ENCODE measurements at regions of chr10 and their contacts with region 1.

Region 1: DNA sequence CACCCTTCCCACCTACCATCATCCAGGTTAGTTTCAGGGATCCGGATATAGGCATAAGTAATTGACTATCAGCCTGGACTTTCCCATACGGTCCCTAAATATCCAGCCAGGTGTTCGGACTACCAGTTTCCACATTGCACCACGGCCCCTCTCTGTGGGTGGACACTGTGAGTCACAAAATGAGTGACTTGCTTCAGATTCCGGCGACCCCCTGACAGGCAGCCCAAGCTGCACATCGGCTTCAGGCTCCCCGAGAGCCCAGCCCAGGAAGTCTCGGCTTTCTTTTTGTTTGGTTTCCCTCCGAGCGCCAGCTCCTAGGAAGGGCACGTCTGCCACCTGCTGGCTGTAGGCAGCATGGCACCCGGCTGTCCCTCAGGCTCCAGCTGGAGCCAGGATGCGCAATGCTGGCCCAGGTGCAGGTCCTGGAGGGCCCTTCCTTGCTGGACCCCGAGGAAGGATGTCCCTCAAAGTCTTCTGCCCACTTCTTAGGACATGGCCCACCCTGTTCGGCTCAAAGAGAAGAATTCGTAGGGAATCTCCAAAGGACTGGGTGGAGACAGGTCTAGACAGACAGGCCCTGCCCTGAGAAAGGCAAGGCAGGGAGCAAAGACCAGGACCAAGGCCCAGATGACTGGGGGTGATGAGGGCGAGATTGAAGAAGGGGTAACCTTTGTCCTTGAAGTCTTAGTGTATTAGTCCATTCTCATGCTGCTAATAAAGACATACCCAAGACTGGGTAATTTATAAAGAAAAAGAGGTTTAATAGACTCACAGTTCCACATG is 10.6 kb downstream of the HABP2 start:
- DNase-seq: peak; percentile 39 to 54 (median 46)
- H3K4me3 ChIP-seq: peak overlapping the region; percentile 17 to 42
- H3K4me3 Mint-ChIP-seq: peak overlapping the region; percentile 71 to 86 (median 84)
- H3K27ac ChIP-seq: no peak overlapping the region
- H3K27ac Mint-ChIP-seq: peak overlapping the region in 1 of 7 donors; percentile 42
- H3K4me1 ChIP-seq: no peaks in the 10 kb centered on the region
- H3K4me1 Mint-ChIP-seq: peaks cover 2 to 12% (median 4%) of the 10 kb centered on the region in 4 donors
- H3K27me3 ChIP-seq: no peaks in the 10 kb centered on the region
- H3K27me3 Mint-ChIP-seq: peaks cover 3 to 6% of the 10 kb centered on the region in 2 donors

Region 2: DNA sequence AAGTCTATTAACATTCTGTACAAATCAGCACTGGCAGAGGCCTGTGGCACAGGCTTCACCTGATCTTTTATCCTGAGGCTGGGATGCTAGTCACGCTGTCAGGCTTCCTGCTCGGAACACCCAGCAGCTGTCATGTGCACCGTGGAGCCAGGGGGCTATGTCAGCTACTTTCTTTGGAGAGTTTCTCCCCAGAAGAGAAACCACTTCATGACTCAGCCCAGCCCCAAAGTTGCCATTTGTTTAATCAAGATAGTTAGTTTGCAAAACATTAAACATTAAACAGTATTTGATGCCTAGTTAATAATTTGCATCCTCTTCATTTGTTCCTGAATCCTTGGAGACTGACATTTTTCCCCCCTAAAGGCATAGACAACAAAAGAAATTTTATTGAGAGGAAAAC is 10.8 kb before region 1 on chr10 and contains the start of gene HABP2:
- CTCF ChIA-PET with region 1: interaction called, 14 read pairs
- POLR2A ChIA-PET with region 1: no interaction called
- intact Hi-C with region 1: no loop called
- DNase-seq: no peak
- H3K4me3 ChIP-seq: no peak within 1 kb of the TSS
- H3K4me3 Mint-ChIP-seq: no peak within 1 kb of the TSS
- H3K27ac ChIP-seq: no peak within 1 kb of the TSS
- H3K27ac Mint-ChIP-seq: no peak within 1 kb of the TSS
- H3K4me1 ChIP-seq: no peaks in the 10 kb centered on the region
- H3K4me1 Mint-ChIP-seq: no peaks in the 10 kb centered on the region
- H3K27me3 ChIP-seq: no peaks in the 10 kb centered on the region
- H3K27me3 Mint-ChIP-seq: peaks cover 6 to 14% of the 10 kb centered on the region in 2 donors
- total RNA-seq, gene HABP2: not detected

Region 3: DNA sequence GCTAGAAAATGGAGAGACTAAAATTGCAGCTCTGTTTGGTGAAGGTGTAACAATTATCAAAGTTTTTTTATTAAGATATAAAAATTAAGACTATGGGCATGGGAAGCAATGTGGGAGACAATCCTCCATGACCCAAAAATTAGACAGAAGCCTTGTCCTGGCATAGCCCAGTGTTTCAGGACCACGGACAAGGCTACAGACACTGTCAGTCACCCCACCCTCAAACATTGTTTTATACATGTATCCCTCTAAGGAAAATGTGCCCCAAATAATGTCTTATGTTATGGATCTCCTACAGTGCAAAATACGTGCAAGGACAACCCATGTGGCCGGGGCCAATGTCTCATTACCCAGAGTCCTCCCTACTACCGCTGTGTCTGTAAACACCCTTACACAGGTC is 13.4 kb after region 1 on chr10:
- CTCF ChIA-PET with region 1: interaction called, 31 read pairs
- POLR2A ChIA-PET with region 1: no interaction called
- intact Hi-C with region 1: no loop called
- DNase-seq: no peak
- H3K4me3 ChIP-seq: no peak overlapping the region
- H3K4me3 Mint-ChIP-seq: no peak overlapping the region
- H3K27ac ChIP-seq: no peak overlapping the region
- H3K27ac Mint-ChIP-seq: no peak overlapping the region
- H3K4me1 ChIP-seq: no peaks in the 10 kb centered on the region
- H3K4me1 Mint-ChIP-seq: no peaks in the 10 kb centered on the region
- H3K27me3 ChIP-seq: no peaks in the 10 kb centered on the region
- H3K27me3 Mint-ChIP-seq: peaks cover 6 to 11% of the 10 kb centered on the region in 2 donors